ENCODE measurements at regions of chr14 and their contacts with region 1.

Region 1: GRCh38 chr14:20461274-20462001 is at the start of gene PIP4P1:
- DNase-seq: peak; percentile 100
- H3K4me3 ChIP-seq: peak within 1 kb of the TSS; percentile 99
- H3K27ac ChIP-seq: peak within 1 kb of the TSS; percentile 97
- H3K4me1 ChIP-seq: peaks cover 0 to 27% (median 19%) of the 10 kb centered on the region in 4 donors
- H3K27me3 ChIP-seq: no peaks in the 10 kb centered on the region
- CTCF ChIP-seq: peak in 1 of 2 experiments; percentile 50

Region 2: GRCh38 chr14:20327005-20327869 is 134.2 kb before region 1 on chr14:
- intact Hi-C with region 1: loop called (anchors 5 kb)
- DNase-seq: no peak
- H3K4me3 ChIP-seq: no peak overlapping the region
- H3K27ac ChIP-seq: peak overlapping the region in 1 of 2 donors; percentile 33
- H3K4me1 ChIP-seq: peaks cover 0 to 48% (median 10%) of the 10 kb centered on the region in 4 donors
- H3K27me3 ChIP-seq: no peaks in the 10 kb centered on the region
- CTCF ChIP-seq: peak; percentile 60 to 62

Region 3: DNA sequence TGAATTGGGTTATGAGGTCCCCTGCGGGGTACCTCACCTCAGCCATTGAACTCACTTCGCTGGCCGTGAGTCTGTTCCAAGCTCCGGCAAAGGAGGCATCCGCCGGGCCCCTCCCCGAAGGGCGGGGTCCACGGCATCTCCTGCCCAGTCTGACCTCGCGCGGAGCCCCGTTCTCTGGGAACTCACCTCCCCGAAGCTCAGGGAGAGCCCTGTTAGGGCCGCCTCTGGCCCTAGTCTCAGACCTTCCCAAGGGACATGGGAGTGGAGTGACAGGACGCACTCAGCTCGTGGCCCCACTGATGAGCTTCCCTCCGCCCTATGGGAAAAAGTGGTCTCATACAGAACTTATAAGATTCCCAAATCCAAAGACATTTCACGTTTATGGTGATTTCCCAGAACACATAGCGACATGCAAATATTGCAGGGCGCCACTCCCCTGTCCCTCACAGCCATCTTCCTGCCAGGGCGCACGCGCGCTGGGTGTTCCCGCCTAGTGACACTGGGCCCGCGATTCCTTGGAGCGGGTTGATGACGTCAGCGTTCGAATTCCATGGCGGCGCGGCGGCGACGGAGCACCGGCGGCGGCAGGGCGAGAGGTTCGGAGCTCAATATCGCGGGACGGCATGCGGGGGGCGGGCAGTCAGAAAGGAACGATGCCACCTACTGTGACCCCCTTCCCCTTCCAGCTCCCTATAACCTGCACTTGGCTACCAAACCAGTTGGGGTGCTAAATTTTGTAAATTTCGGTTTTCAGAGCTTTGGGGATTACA is 118.2 kb before region 1 on chr14 and contains the start of gene PARP2:
- intact Hi-C with region 1: loop called (anchors 5 kb)
- DNase-seq: peak; percentile 97 to 98
- H3K4me3 ChIP-seq: peak within 1 kb of the TSS; percentile 71 to 72
- H3K27ac ChIP-seq: peak within 1 kb of the TSS; percentile 82 to 90
- H3K4me1 ChIP-seq: peaks cover 0 to 12% (median 7%) of the 10 kb centered on the region in 4 donors
- H3K27me3 ChIP-seq: no peaks in the 10 kb centered on the region
- CTCF ChIP-seq: no peak

Region 4: DNA sequence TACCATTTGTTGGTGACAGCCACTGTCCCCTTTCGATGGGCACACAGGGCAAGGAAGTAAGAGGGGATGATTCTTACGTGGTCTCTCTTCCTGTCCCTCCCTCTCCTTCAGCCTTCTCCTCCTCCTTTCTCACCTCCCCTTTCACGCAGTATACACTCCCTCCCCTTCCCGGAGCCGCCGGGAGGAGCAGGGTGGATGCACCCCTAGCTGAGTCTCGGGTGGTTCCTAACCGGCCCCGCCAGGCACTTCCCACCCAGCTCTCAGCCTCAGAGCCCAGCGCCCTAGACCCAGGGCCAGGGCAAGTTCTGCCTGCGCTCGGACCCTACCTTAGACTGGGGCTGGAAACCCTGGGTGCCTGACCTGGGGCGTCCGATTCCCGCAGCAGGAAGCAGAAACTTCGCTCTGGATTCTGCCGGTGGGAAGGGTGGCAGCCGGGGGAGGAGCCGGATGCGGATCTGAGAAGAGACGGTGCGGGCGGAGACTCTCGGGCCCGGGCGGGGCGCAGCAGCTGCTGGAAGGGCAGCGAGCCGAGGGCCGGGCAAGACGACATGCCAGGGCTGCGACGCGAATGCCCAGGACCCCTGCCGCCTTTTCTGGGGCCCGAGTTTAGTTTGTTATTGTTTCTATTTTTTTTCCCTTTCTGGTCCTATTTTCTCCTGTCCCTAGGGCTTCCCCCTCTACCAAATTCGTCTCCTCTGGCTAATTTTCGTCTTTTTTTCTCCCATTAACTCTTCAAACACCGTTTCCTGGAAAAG is 48.2 kb before region 1 on chr14 and contains the start of gene TEP1:
- intact Hi-C with region 1: loop called (anchors 5 kb)
- DNase-seq: peak; percentile 92 to 94
- H3K4me3 ChIP-seq: peak within 1 kb of the TSS; percentile 75 to 91
- H3K27ac ChIP-seq: peak within 1 kb of the TSS; percentile 94
- H3K4me1 ChIP-seq: peaks cover 0 to 19% (median 12%) of the 10 kb centered on the region in 4 donors
- H3K27me3 ChIP-seq: no peaks in the 10 kb centered on the region
- CTCF ChIP-seq: peak in 1 of 2 experiments; percentile 8

Measured in tibial artery (tissue), 4 donors.